ENCODE measurements at regions of chr16 and their contacts with region 1.

Region 1: GRCh38 chr16:24328835-24329452 is 72.8 kb downstream of the CACNG3 start:
- DNase-seq: no peak
- H3K4me3 ChIP-seq: no peak overlapping the region
- H3K27ac ChIP-seq: no peak overlapping the region
- H3K4me1 ChIP-seq: no peaks in the 10 kb centered on the region
- H3K27me3 ChIP-seq: no peaks in the 10 kb centered on the region
- CTCF ChIP-seq: no peak
- EP300 ChIP-seq: no peak
- POLR2A ChIP-seq: no peak

Region 2: DNA sequence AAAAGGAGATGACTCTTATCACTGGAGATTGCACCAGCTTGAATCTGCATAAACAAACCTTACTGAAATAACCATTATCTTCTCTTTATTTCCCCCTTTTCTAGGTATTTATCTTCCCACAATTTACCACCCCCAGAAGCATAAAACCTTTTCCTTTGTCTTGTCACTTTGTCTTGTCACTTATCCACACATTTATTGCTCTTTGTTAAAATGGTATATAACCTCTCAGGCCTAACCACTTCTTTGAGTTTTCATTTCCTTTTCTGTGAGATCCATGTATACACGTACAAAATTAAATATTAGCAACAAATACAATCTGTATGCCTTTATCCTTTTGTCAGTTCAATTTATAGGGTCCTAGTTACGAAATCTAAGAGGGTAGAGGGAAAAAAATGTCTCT is 50.1 kb after region 1 on chr16:
- intact Hi-C with region 1: loop called in 1 of 4 experiments (anchors 5 kb)
- DNase-seq: no peak
- H3K4me3 ChIP-seq: no peak overlapping the region
- H3K27ac ChIP-seq: no peak overlapping the region
- H3K4me1 ChIP-seq: no peaks in the 10 kb centered on the region
- H3K27me3 ChIP-seq: no peaks in the 10 kb centered on the region
- CTCF ChIP-seq: no peak
- EP300 ChIP-seq: no peak
- POLR2A ChIP-seq: no peak

Region 3: DNA sequence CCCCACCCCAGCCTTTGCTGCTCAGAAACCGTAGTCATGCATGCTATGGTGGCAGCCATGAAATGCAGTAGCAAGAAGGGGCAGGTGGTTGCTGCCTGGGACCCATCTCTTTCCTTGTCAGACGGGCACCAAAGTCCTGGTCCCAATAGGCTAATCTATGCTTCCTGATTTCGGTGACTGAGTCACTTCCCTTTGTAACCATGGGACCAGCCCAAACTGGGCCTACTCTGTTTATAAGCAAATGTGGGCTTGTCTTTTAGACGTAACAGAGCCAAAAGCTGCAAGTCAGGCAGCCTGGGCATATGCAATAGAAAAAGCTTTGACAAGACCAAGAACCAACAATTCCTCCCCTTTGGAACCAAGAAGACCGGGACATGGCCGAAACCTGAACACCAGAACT is 111.4 kb after region 1 on chr16:
- intact Hi-C with region 1: no loop called
- DNase-seq: no peak
- H3K4me3 ChIP-seq: no peak overlapping the region
- H3K27ac ChIP-seq: no peak overlapping the region
- H3K4me1 ChIP-seq: no peaks in the 10 kb centered on the region
- H3K27me3 ChIP-seq: no peaks in the 10 kb centered on the region
- CTCF ChIP-seq: no peak
- EP300 ChIP-seq: no peak
- POLR2A ChIP-seq: no peak